ENCODE measurements at regions of chr15 and their contacts with region 1.

Region 1: GRCh38 chr15:83011271-83012075 is at the start of gene C15orf40:
- DNase-seq: peak; percentile 82 to 89 (median 83)
- H3K4me3 ChIP-seq: peak within 1 kb of the TSS; percentile 70 to 92
- H3K4me3 Mint-ChIP-seq: peak within 1 kb of the TSS; percentile 95 to 100 (median 98)
- H3K27ac ChIP-seq: peak within 1 kb of the TSS; percentile 68
- H3K27ac Mint-ChIP-seq: peak within 1 kb of the TSS; percentile 85 to 97 (median 96)
- H3K4me1 ChIP-seq: peaks cover 35% of the 10 kb centered on the region
- H3K4me1 Mint-ChIP-seq: peaks cover 34 to 55% (median 46%) of the 10 kb centered on the region in 4 donors
- H3K27me3 ChIP-seq: no peaks in the 10 kb centered on the region
- H3K27me3 Mint-ChIP-seq: no peaks in the 10 kb centered on the region
- total RNA-seq, gene C15orf40: 47.0 to 48.5 TPM

Region 2: GRCh38 chr15:82714026-82714425 is 297.4 kb before region 1 on chr15:
- CTCF ChIA-PET with region 1: no interaction called
- POLR2A ChIA-PET with region 1: no interaction called
- intact Hi-C with region 1: no loop called
- DNase-seq: no peak
- H3K4me3 ChIP-seq: no peak overlapping the region
- H3K4me3 Mint-ChIP-seq: no peak overlapping the region
- H3K27ac ChIP-seq: no peak overlapping the region
- H3K27ac Mint-ChIP-seq: no peak overlapping the region
- H3K4me1 ChIP-seq: peaks cover 6% of the 10 kb centered on the region
- H3K4me1 Mint-ChIP-seq: peaks cover 0 to 6% (median 0%) of the 10 kb centered on the region in 4 donors
- H3K27me3 ChIP-seq: no peaks in the 10 kb centered on the region
- H3K27me3 Mint-ChIP-seq: peaks cover 7 to 24% of the 10 kb centered on the region in 2 donors

Region 3: GRCh38 chr15:82778755-82779154 is 232.7 kb before region 1 on chr15:
- CTCF ChIA-PET with region 1: no interaction called
- POLR2A ChIA-PET with region 1: no interaction called
- intact Hi-C with region 1: no loop called
- DNase-seq: no peak
- H3K4me3 ChIP-seq: no peak overlapping the region
- H3K4me3 Mint-ChIP-seq: no peak overlapping the region
- H3K27ac ChIP-seq: no peak overlapping the region
- H3K27ac Mint-ChIP-seq: no peak overlapping the region
- H3K4me1 ChIP-seq: no peaks in the 10 kb centered on the region
- H3K4me1 Mint-ChIP-seq: peaks cover 0 to 2% (median 0%) of the 10 kb centered on the region in 4 donors
- H3K27me3 ChIP-seq: no peaks in the 10 kb centered on the region
- H3K27me3 Mint-ChIP-seq: peaks cover 0 to 3% of the 10 kb centered on the region in 2 donors

Region 4: DNA sequence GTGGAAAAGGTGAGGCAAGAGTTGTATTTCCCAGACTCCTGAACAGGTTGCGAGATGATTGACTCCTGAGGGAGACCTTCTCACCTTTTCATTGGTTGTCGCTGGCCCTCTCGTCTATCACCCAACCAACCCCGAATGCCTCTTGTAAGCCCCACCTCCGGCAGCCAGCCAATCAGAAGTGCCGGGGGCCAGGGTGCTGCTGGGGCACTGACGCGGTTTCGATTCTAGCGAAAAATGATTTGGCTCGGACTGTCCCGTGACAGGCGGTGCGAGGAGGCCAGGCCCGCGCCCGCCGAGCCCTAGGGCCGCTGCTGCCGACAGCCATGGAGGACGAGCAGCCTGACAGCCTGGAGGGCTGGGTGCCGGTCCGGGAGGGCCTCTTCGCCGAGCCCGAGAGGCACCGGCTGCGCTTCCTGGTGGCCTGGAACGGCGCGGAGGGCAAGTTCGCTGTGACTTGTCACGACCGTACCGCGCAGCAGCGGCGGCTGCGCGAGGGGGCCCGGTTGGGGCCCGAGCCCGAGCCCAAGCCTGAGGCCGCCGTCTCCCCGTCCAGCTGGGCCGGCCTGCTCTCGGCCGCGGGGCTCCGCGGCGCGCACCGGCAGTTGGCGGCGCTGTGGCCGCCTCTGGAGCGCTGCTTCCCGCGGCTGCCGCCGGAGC is 201.9 kb before region 1 on chr15 and contains the start of gene WHAMM:
- CTCF ChIA-PET with region 1: no interaction called
- POLR2A ChIA-PET with region 1: interaction called, 11 read pairs
- intact Hi-C with region 1: loop called (anchors 2 kb)
- DNase-seq: peak; percentile 94 to 98 (median 96)
- H3K4me3 ChIP-seq: peak within 1 kb of the TSS; percentile 89 to 94
- H3K4me3 Mint-ChIP-seq: peak within 1 kb of the TSS; percentile 88 to 100 (median 96)
- H3K27ac ChIP-seq: peak within 1 kb of the TSS; percentile 99
- H3K27ac Mint-ChIP-seq: peak within 1 kb of the TSS; percentile 95 to 100 (median 97)
- H3K4me1 ChIP-seq: peaks cover 35% of the 10 kb centered on the region
- H3K4me1 Mint-ChIP-seq: peaks cover 15 to 40% (median 28%) of the 10 kb centered on the region in 4 donors
- H3K27me3 ChIP-seq: no peaks in the 10 kb centered on the region
- H3K27me3 Mint-ChIP-seq: no peaks in the 10 kb centered on the region
- total RNA-seq, gene WHAMM: 31.6 to 33.5 TPM

Region 5: GRCh38 chr15:82933576-82933975 is 77.9 kb before region 1 on chr15:
- CTCF ChIA-PET with region 1: no interaction called
- POLR2A ChIA-PET with region 1: no interaction called
- intact Hi-C with region 1: no loop called
- DNase-seq: no peak
- H3K4me3 ChIP-seq: no peak overlapping the region
- H3K4me3 Mint-ChIP-seq: no peak overlapping the region
- H3K27ac ChIP-seq: no peak overlapping the region
- H3K27ac Mint-ChIP-seq: peak overlapping the region in 1 of 7 donors; percentile 38
- H3K4me1 ChIP-seq: no peaks in the 10 kb centered on the region
- H3K4me1 Mint-ChIP-seq: peaks cover 0 to 2% (median 0%) of the 10 kb centered on the region in 4 donors
- H3K27me3 ChIP-seq: no peaks in the 10 kb centered on the region
- H3K27me3 Mint-ChIP-seq: peaks cover 0 to 3% of the 10 kb centered on the region in 2 donors

Region 6: GRCh38 chr15:82985688-82986441 is 25.6 kb before region 1 on chr15 and contains the start of gene RAMAC:
- CTCF ChIA-PET with region 1: interaction called, 23 read pairs
- POLR2A ChIA-PET with region 1: interaction called, 42 read pairs
- intact Hi-C with region 1: loop called (anchors 1 kb)
- DNase-seq: peak; percentile 90 to 98 (median 93)
- H3K4me3 ChIP-seq: peak within 1 kb of the TSS; percentile 87 to 91
- H3K4me3 Mint-ChIP-seq: peak within 1 kb of the TSS; percentile 96 to 99 (median 99)
- H3K27ac ChIP-seq: peak within 1 kb of the TSS; percentile 71
- H3K27ac Mint-ChIP-seq: peak within 1 kb of the TSS; percentile 91 to 99 (median 96)
- H3K4me1 ChIP-seq: peaks cover 18% of the 10 kb centered on the region
- H3K4me1 Mint-ChIP-seq: peaks cover 15 to 32% (median 25%) of the 10 kb centered on the region in 4 donors
- H3K27me3 ChIP-seq: no peaks in the 10 kb centered on the region
- H3K27me3 Mint-ChIP-seq: no peaks in the 10 kb centered on the region
- total RNA-seq, gene RAMAC: 19.3 to 22.0 TPM

Region 7: DNA sequence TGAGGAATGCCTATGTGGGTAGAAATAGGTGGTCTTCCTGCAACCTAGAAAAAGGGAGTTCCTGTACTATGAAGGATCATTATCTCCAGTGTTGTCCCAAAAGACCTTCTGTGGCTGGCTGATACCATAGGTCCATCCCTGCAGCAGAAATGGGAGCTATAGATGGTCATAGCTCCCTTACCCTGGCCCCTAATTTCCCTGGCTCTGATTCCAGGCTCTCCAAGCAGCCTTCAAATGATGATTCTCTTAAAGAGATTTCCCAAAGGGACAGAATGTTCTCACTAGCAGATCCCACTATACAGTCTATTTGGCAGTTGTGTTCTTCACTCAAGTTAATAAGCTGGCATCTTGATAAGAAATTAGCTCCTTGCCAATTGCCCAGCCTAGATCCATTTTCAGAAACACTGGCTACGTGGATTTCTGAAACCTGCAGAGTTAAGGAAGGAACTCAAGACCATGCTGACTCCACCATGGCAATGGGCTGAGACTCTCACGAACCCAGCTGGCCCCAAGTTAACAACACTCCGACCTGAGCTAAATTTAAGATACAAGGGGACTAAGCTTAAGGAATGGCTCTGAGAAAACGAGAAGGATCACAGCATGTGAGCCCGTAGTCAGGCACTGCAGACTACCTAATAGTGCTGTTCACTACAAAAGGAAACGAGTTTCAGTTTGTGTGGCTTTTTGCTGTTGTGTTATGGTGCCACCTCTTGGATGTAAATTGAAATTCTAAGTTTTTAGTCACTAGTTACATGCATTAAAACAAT is 11.4 kb before region 1 on chr15:
- CTCF ChIA-PET with region 1: interaction called, 28 read pairs
- POLR2A ChIA-PET with region 1: interaction called, 5 read pairs
- intact Hi-C with region 1: no loop called
- DNase-seq: peak in 4 of 5 donors; percentile 48 to 52 (median 50)
- H3K4me3 ChIP-seq: peak overlapping the region; percentile 1 to 48
- H3K4me3 Mint-ChIP-seq: peak overlapping the region in 7 of 8 donors; percentile 66 to 84 (median 79)
- H3K27ac ChIP-seq: peak overlapping the region; percentile 10
- H3K27ac Mint-ChIP-seq: peak overlapping the region; percentile 51 to 94 (median 89)
- H3K4me1 ChIP-seq: peaks cover 9% of the 10 kb centered on the region
- H3K4me1 Mint-ChIP-seq: peaks cover 6 to 12% (median 9%) of the 10 kb centered on the region in 4 donors
- H3K27me3 ChIP-seq: no peaks in the 10 kb centered on the region
- H3K27me3 Mint-ChIP-seq: no peaks in the 10 kb centered on the region

Region 8: DNA sequence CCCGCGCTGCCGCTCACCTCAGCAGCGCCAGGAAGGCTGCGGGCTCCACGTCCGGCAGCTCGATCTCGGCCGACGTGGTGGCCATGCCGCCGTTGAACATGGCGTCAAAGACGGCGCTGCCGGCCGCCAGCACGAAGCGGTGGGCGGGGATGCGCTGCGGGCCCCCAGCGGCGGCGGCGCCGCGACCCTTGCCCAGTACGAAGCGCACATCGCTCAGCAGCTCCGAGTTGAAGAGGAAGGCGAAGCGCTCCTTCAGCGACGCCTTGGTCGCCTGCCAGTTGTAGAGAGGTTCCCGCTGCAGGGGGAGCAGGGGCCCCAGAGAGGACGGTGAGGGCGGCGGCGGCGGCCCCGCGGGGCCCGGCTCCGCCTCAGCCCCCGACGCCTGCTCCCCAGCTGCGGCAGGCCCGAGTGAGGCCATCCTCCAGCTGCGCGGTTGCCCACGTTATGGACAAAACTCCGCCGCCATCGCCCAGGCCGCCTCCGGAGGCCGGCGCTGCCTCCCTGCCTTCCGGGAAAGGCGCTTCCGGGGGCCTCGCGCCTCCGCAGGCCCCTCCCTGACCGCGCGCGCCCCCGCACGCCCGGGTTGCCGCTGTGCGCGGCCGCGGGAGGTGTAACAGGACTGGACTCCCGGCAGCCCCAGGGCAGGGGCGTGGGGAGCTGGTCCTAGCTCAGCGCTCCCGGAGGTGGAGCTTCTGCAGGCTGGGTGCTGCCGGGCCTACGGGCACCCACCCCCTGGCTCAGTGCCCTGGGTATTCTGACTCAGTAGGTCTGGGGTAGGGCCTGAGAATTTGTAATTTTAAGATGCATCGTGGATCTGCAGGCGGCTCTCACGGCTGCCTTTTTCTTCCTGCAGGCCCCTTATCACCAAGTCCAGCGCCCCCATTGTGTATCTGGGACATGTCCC is 55.5 kb after region 1 on chr15 and contains the start of gene BTBD1:
- CTCF ChIA-PET with region 1: interaction called, 6 read pairs
- POLR2A ChIA-PET with region 1: interaction called, 31 read pairs
- intact Hi-C with region 1: loop called (anchors 1 kb)
- DNase-seq: peak; percentile 72 to 82 (median 78)
- H3K4me3 ChIP-seq: peak within 1 kb of the TSS; percentile 58 to 82
- H3K4me3 Mint-ChIP-seq: peak within 1 kb of the TSS; percentile 78 to 96 (median 86)
- H3K27ac ChIP-seq: peak within 1 kb of the TSS; percentile 78
- H3K27ac Mint-ChIP-seq: peak within 1 kb of the TSS; percentile 58 to 94 (median 84)
- H3K4me1 ChIP-seq: peaks cover 44% of the 10 kb centered on the region
- H3K4me1 Mint-ChIP-seq: peaks cover 6 to 16% (median 13%) of the 10 kb centered on the region in 4 donors
- H3K27me3 ChIP-seq: no peaks in the 10 kb centered on the region
- H3K27me3 Mint-ChIP-seq: no peaks in the 10 kb centered on the region
- total RNA-seq, gene BTBD1: 36.5 to 39.6 TPM

Region 9: DNA sequence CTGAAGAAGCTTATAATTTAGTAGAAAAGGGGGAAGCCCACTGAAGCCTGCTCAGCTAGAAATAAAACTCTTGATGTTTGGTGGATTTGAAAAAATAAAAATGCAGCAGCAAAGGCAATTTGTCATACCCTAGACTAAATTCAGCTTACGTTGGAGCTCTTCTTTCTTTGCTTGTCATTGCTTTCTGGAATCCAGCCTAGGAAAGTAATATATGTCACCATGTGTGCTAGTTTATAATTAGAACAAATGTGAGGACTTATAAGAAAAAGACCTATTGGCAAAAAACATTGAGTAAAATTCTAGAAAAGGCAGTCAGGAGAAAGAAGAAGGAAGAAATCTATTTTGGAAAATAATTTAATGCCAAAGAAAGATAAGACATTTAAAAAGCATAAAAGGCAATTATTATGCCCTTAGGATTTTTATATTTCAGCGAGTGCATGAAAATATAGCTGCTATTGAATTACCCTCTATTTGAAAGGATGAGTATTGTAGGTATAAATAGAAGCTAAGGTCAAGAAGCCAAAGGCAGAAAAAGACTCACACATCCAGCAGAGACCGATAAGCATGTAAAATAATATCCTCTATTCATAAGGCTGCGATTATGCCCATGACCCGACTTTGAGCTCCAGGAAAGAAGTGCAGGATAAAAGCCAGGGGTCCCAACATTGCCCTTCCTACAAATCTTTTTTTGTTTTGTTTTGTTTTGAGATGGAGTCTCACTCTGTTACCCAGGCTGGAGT is 66.2 kb after region 1 on chr15:
- CTCF ChIA-PET with region 1: no interaction called
- POLR2A ChIA-PET with region 1: no interaction called
- intact Hi-C with region 1: no loop called
- DNase-seq: no peak
- H3K4me3 ChIP-seq: no peak overlapping the region
- H3K4me3 Mint-ChIP-seq: no peak overlapping the region
- H3K27ac ChIP-seq: no peak overlapping the region
- H3K27ac Mint-ChIP-seq: peak overlapping the region in 1 of 7 donors; percentile 25
- H3K4me1 ChIP-seq: no peaks in the 10 kb centered on the region
- H3K4me1 Mint-ChIP-seq: peaks cover 0 to 3% (median 0%) of the 10 kb centered on the region in 4 donors
- H3K27me3 ChIP-seq: no peaks in the 10 kb centered on the region
- H3K27me3 Mint-ChIP-seq: peaks cover 23 to 27% of the 10 kb centered on the region in 2 donors

Region 10: DNA sequence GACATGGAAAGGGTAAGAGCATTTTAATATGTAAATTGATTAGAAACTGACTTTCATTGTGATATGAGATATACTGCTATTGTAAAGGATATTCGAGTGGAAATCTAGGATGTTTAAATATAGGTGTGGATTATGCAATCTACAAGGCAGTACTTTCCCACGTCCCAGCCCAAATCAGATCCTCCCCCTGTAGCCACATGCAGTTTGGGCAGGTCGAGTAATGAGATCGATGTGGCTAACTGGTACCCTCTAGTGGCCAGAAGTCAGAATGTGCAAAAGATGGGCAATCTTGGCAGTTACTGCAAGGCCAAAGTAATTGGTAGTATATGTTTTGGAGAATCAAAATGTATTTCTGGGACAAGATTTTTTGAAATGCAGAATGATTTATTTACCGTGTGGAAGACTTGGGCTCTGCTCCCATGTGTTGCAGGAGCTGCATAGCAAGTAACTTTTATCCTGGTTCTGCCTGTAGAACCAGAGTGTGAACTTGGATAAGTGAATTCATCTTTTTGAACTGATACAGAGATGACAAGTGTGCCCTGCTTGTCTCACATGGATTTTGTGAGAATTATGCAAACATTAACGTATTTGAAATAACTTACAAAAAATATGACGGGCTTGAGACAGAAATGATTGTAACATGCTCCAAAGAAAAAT is 548.0 kb after region 1 on chr15:
- CTCF ChIA-PET with region 1: no interaction called
- POLR2A ChIA-PET with region 1: no interaction called
- intact Hi-C with region 1: loop called (anchors 5 kb)
- DNase-seq: peak in 4 of 5 donors; percentile 15 to 30 (median 22)
- H3K4me3 ChIP-seq: no peak overlapping the region
- H3K4me3 Mint-ChIP-seq: no peak overlapping the region
- H3K27ac ChIP-seq: no peak overlapping the region
- H3K27ac Mint-ChIP-seq: no peak overlapping the region
- H3K4me1 ChIP-seq: no peaks in the 10 kb centered on the region
- H3K4me1 Mint-ChIP-seq: peaks cover 0 to 2% (median 0%) of the 10 kb centered on the region in 4 donors
- H3K27me3 ChIP-seq: no peaks in the 10 kb centered on the region
- H3K27me3 Mint-ChIP-seq: peaks cover 4 to 5% of the 10 kb centered on the region in 2 donors